ENCODE measurements at regions of chr22 and their contacts with region 1.

Region 1: DNA sequence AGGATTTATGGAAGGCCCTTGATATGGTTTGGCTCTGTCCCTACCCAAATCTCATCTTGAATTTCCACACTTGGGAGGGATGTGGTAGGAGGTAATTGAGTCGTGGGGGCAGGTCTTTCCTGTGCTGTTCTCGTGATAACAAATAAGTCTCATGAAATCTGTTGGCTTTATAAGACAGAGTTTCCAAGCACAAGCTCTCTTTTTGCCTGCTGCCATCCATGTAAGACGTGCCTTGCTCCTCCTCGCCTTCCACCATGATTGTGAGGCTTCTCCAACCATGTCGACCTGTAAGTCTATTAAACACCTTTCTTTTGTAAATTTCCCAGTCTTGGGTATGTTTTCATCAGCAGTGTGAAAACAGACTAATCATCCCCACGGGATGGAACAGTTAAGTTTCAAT is 557.2 kb upstream of the ISX start:
- DNase-seq: no peak
- ATAC-seq: no peak
- H3K4me3 ChIP-seq: no peak overlapping the region
- H3K27ac ChIP-seq: no peak overlapping the region
- H3K4me1 ChIP-seq: no peaks in the 10 kb centered on the region
- H3K27me3 ChIP-seq: peaks cover 0 to 13% (median 6%) of the 10 kb centered on the region in 7 donors
- CTCF ChIP-seq: no peak

Region 2: GRCh38 chr22:33737662-33738061 is 771.1 kb before region 1 on chr22:
- intact Hi-C with region 1: no loop called
- DNase-seq: no peak
- ATAC-seq: peak in 7 of 8 donors; percentile 33 to 81 (median 54)
- H3K4me3 ChIP-seq: no peak overlapping the region
- H3K27ac ChIP-seq: peak overlapping the region in 2 of 10 donors; percentile 1 to 21
- H3K4me1 ChIP-seq: peaks cover 0 to 35% (median 7%) of the 10 kb centered on the region in 9 donors
- H3K27me3 ChIP-seq: no peaks in the 10 kb centered on the region
- CTCF ChIP-seq: no peak

Region 3: DNA sequence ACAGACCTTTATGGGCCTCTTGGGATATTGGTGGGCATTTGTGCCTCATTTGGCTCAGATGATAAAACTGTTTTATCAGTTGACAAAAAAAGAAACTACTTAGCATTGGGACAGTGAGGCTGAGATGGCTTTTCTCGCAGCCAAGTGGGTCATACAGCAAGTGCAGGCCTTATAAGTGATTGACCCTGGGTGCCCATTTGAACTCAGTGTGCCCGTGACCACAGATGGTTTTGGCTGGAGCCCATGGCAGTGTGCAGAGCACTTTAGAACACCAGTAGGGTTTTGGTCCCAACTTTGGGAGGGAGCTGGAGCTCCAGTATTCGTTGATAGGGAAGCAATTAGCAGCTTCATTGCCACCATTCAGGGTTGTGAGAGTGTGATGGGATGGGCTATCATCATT is 184.0 kb before region 1 on chr22:
- intact Hi-C with region 1: no loop called
- DNase-seq: peak; percentile 28 to 48
- ATAC-seq: peak in 6 of 8 donors; percentile 23 to 99 (median 86)
- H3K4me3 ChIP-seq: no peak overlapping the region
- H3K27ac ChIP-seq: no peak overlapping the region
- H3K4me1 ChIP-seq: no peaks in the 10 kb centered on the region
- H3K27me3 ChIP-seq: no peaks in the 10 kb centered on the region
- CTCF ChIP-seq: no peak

Region 4: GRCh38 chr22:34454598-34454997 is 54.2 kb before region 1 on chr22:
- intact Hi-C with region 1: no loop called
- DNase-seq: no peak
- ATAC-seq: no peak
- H3K4me3 ChIP-seq: no peak overlapping the region
- H3K27ac ChIP-seq: no peak overlapping the region
- H3K4me1 ChIP-seq: no peaks in the 10 kb centered on the region
- H3K27me3 ChIP-seq: peaks cover 0 to 14% (median 0%) of the 10 kb centered on the region in 7 donors
- CTCF ChIP-seq: no peak

Region 5: DNA sequence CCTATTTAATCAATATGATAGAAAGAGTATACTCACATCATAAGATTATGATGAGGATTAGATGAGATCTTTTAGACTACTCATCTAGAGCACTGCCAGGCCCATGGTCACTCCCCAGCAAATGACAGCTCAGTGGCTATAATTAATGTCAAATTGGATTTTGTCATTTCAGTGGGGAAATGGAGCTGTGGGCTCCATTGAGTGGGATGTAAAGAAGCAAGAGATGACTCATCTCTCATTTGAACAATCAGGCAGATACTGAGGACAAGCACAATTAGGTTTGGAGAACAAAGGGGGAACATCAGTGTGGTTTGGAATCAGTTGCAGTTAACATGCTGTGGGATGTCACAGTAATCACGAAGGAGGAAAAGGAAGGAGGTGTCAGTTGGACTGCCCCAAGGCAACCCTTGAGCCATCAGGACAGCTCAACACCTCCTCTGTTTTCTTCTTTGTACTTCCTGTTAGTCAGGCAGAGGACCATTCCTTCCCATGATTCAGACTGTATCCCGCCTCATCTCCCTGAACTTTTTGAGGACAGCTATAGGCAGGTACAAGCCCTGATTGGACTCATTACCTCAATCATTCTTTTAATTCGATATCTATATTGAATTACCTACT is 83.4 kb after region 1 on chr22:
- intact Hi-C with region 1: loop called in 1 of 10 experiments (anchors 10 kb)
- DNase-seq: no peak
- ATAC-seq: no peak
- H3K4me3 ChIP-seq: no peak overlapping the region
- H3K27ac ChIP-seq: no peak overlapping the region
- H3K4me1 ChIP-seq: no peaks in the 10 kb centered on the region
- H3K27me3 ChIP-seq: peaks cover 0 to 7% (median 0%) of the 10 kb centered on the region in 7 donors
- CTCF ChIP-seq: no peak

Region 6: DNA sequence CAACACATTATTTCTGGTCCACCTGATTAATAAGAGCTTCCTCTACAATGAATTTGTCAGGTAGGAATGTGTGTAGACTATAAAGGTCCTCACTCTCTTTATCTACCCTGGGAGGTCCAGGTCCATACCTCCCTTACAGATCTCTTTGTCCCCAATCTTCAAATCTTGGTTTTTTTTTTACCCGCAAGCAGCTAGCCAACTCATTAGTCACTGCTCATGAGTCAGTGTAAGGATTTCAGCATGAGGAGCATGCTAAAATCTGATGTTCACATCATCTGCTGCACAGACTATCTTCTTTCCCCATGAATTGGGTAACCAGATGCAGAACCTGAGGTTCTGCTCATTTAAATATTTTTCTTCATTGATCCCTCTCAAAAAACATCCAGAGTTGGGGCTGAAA is 160.2 kb after region 1 on chr22:
- intact Hi-C with region 1: loop called in 1 of 10 experiments (anchors 5 kb)
- DNase-seq: no peak
- ATAC-seq: no peak
- H3K4me3 ChIP-seq: no peak overlapping the region
- H3K27ac ChIP-seq: no peak overlapping the region
- H3K4me1 ChIP-seq: no peaks in the 10 kb centered on the region
- H3K27me3 ChIP-seq: peaks cover 0 to 5% (median 0%) of the 10 kb centered on the region in 7 donors
- CTCF ChIP-seq: no peak

Measured in heart right ventricle (tissue), 16 donors.